GM23248 (cell line): ENCODE measurements at regions of chr7 and their contacts with region 1.

Region 1: GRCh38 chr7:80047856-80048459 is 86.7 kb upstream of the GNAI1 start:
- DNase-seq: peak; percentile 48
- H3K4me3 ChIP-seq: no peak overlapping the region
- H3K27ac ChIP-seq: no peak overlapping the region
- H3K4me1 ChIP-seq: no peaks in the 10 kb centered on the region
- H3K27me3 ChIP-seq: no peaks in the 10 kb centered on the region

Region 2: GRCh38 chr7:78510580-78511188 is 1537.3 kb before region 1 on chr7:
- in situ Hi-C with region 1: loop called (anchors 25 kb)
- DNase-seq: peak; percentile 80
- H3K4me3 ChIP-seq: no peak overlapping the region
- H3K27ac ChIP-seq: no peak overlapping the region
- H3K4me1 ChIP-seq: no peaks in the 10 kb centered on the region
- H3K27me3 ChIP-seq: no peaks in the 10 kb centered on the region

Region 3: DNA sequence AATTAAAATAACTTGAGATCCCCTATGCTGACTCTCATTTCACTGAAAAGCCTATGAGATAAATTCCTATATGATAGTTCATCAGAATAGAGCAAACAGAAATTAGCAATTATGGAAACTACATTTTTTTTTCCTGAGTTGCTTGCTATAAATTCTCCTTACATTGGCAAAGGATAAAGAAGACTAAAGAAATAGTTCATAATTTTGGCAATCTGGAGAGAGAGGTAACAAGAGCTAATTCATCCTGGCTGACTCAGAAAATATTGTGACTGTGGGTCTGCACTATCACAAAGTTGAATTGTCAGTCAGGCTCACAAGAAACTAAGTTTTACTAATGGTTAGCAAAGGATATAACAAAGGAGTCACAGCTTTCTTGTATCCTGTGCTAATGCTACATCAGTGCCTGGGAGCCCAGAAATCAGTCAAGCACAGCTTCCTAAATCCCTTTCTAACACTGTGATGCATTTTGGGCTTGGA is 1077.5 kb before region 1 on chr7:
- in situ Hi-C with region 1: loop called (anchors 25 kb)
- DNase-seq: peak; percentile 26
- H3K4me3 ChIP-seq: no peak overlapping the region
- H3K27ac ChIP-seq: no peak overlapping the region
- H3K4me1 ChIP-seq: peaks cover 14% of the 10 kb centered on the region
- H3K27me3 ChIP-seq: no peaks in the 10 kb centered on the region

Region 4: DNA sequence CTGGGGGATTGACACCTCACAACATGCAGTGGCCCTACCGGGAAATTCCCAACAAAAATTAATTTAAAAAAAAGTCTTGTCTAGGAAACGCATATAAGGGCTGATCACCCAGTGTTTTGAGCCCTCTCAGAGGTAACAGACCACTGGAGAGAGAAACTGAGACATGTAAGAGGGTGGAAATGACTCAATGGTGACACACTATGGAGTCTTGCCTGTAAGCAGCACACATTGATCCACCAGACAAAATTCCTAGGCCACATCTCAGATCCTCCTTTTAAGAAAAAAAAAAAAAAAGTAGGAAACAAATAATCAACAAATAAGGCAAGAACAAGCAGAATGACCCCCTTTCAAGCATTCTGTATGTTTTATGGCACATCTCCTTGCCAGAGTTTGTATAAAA is 890.7 kb before region 1 on chr7:
- in situ Hi-C with region 1: no loop called
- DNase-seq: no peak
- H3K4me3 ChIP-seq: no peak overlapping the region
- H3K27ac ChIP-seq: no peak overlapping the region
- H3K4me1 ChIP-seq: no peaks in the 10 kb centered on the region
- H3K27me3 ChIP-seq: no peaks in the 10 kb centered on the region

Region 5: GRCh38 chr7:79298145-79298760 is 749.7 kb before region 1 on chr7:
- in situ Hi-C with region 1: loop called (anchors 25 kb)
- DNase-seq: peak; percentile 75
- H3K4me3 ChIP-seq: no peak overlapping the region
- H3K27ac ChIP-seq: no peak overlapping the region
- H3K4me1 ChIP-seq: peaks cover 13% of the 10 kb centered on the region; the same call in 1 of the 2 replicates
- H3K27me3 ChIP-seq: no peaks in the 10 kb centered on the region

Region 6: DNA sequence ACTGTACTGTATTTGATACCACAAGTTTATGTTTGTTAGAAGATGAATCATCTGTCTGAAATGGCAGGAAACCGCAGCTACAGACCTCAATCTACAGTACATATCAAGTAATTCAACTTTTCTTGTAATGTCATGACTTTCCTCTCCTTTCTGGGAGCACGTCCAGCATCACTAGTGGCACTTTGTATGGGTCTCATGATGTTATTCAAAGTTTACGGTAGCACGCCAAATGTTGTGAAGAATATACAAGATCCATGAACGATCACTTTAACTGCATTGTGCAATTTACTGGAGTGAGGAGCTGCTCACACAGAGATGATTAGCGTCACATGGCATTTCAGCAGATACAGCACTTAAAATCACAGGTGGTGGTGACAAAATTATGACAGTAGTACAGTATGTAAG is 171.1 kb before region 1 on chr7:
- in situ Hi-C with region 1: no loop called
- DNase-seq: peak; percentile 35
- H3K4me3 ChIP-seq: no peak overlapping the region
- H3K27ac ChIP-seq: no peak overlapping the region
- H3K4me1 ChIP-seq: peaks cover 6% of the 10 kb centered on the region
- H3K27me3 ChIP-seq: no peaks in the 10 kb centered on the region

Region 7: GRCh38 chr7:80646083-80646865 is 598.3 kb after region 1 on chr7:
- in situ Hi-C with region 1: no loop called
- DNase-seq: no peak
- H3K4me3 ChIP-seq: no peak overlapping the region
- H3K27ac ChIP-seq: no peak overlapping the region
- H3K4me1 ChIP-seq: peaks cover 10% of the 10 kb centered on the region
- H3K27me3 ChIP-seq: no peaks in the 10 kb centered on the region